H1 (cell line): ENCODE measurements at regions of chr1 and their contacts with region 1.

Region 1: GRCh38 chr1:35882945-35883634 is at the start of gene AGO1:
- DNase-seq: peak; percentile 85 to 99
- H3K4me3 ChIP-seq: peak within 1 kb of the TSS; percentile 90 to 99 (median 98)
- H3K27ac ChIP-seq: 0 out of 2 replicates have a peak within 1 kb of the TSS, but pooled peaks have one; percentile 42
- H3K4me1 ChIP-seq: peaks cover 14 to 32% (median 29%) of the 10 kb centered on the region in 4 experiments
- H3K27me3 ChIP-seq: peaks cover 0 to 5% (median 2%) of the 10 kb centered on the region in 4 experiments; a peak in 2 of 7 replicates
- CTCF ChIP-seq: peak; percentile 90 to 95 (median 94)
- EP300 ChIP-seq: no peak
- POLR2A ChIP-seq: peak in 1 of 2 experiments; percentile 47; a peak in 1 of 3 replicates
- RAD21 ChIP-seq: peak; percentile 31 to 53; a peak in 3 of 4 replicates
- total RNA-seq, gene AGO1: 71.2 and 73.7 TPM in 2 replicates

Region 2: GRCh38 chr1:35857830-35858229 is 25.3 kb before region 1 on chr1:
- CTCF ChIA-PET with region 1: interaction called, 12 read pairs
- POLR2A ChIA-PET with region 1: interaction called, 5 read pairs
- DNase-seq: no peak
- H3K4me3 ChIP-seq: no peak overlapping the region
- H3K27ac ChIP-seq: no peak overlapping the region
- H3K4me1 ChIP-seq: 0 out of 7 replicates have a peak, but pooled peaks cover 0 to 1% (median 0%) of the 10 kb centered on the region in 4 experiments
- H3K27me3 ChIP-seq: no peaks in the 10 kb centered on the region
- CTCF ChIP-seq: peak in 2 of 3 experiments; percentile 20 to 38; a peak in 3 of 4 replicates
- EP300 ChIP-seq: no peak
- POLR2A ChIP-seq: no peak
- RAD21 ChIP-seq: peak; percentile 62 to 67

Region 3: GRCh38 chr1:35863881-35864625 is 19.0 kb before region 1 on chr1:
- CTCF ChIA-PET with region 1: interaction called, 12 read pairs
- POLR2A ChIA-PET with region 1: interaction called, 5 read pairs
- DNase-seq: no peak
- H3K4me3 ChIP-seq: no peak overlapping the region
- H3K27ac ChIP-seq: no peak overlapping the region
- H3K4me1 ChIP-seq: no peaks in the 10 kb centered on the region
- H3K27me3 ChIP-seq: no peaks in the 10 kb centered on the region
- CTCF ChIP-seq: no peak
- EP300 ChIP-seq: no peak
- POLR2A ChIP-seq: no peak
- RAD21 ChIP-seq: no peak

Region 4: GRCh38 chr1:35894656-35895055 is 11.6 kb after region 1 on chr1:
- CTCF ChIA-PET with region 1: interaction called, 22 read pairs
- POLR2A ChIA-PET with region 1: interaction called, 6 read pairs
- DNase-seq: no peak
- H3K4me3 ChIP-seq: no peak overlapping the region
- H3K27ac ChIP-seq: no peak overlapping the region
- H3K4me1 ChIP-seq: no peaks in the 10 kb centered on the region
- H3K27me3 ChIP-seq: no peaks in the 10 kb centered on the region
- CTCF ChIP-seq: no peak
- EP300 ChIP-seq: no peak
- POLR2A ChIP-seq: no peak
- RAD21 ChIP-seq: no peak

Region 5: DNA sequence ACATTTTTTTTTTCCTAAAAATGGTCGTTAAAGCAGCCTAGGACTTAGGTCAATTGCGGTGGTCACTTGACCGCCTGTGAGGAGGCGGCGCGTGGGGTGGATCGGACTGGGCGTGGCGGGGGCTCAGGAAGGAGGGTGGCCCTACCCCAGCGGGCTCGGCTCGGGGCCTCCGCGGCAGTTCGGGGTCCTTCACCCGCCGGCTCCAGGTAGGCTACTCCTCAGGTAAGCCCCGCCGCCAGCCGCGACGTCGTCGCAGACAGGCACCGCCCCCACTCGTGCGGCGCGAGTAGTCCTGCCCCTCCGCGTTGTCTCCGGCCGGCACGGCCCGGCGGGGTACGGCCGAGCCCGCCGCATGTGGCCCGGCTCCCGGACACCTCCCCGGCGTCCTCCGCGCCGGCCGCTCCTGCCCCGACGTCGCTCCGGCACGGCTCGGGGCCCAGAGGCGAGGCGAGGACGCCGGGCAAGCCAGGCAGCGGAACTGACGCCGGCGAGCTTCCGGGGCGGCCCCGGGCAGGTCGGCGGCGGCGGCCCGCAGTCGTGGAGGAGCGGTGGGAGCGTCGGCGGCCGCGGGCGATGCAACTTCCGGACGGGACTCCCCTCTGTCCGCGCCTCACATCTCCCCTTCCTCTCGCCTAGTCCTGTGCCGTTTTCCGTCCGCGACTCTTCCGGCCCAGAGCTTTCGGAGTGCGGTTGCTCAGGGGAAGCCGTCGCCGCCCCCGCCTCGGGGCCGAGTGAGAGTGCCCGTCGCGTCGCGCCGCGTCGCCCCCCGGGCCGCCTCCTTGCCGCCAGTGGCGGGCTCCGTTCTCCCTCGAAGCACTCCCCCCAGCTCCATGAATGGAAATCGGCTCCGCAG is 47.7 kb after region 1 on chr1 and contains the start of gene AGO3:
- CTCF ChIA-PET with region 1: interaction called, 3 read pairs
- POLR2A ChIA-PET with region 1: interaction called, 19 read pairs
- DNase-seq: peak; percentile 53 to 91
- H3K4me3 ChIP-seq: peak within 1 kb of the TSS; percentile 85 to 92 (median 90)
- H3K27ac ChIP-seq: peak within 1 kb of the TSS; percentile 86
- H3K4me1 ChIP-seq: peaks cover 0 to 4% (median 0%) of the 10 kb centered on the region in 4 experiments; a peak in 2 of 7 replicates
- H3K27me3 ChIP-seq: no peaks in the 10 kb centered on the region
- CTCF ChIP-seq: no peak; a peak in 1 of 4 replicates
- EP300 ChIP-seq: no peak
- POLR2A ChIP-seq: peak; percentile 81 to 93
- RAD21 ChIP-seq: no peak; a peak in 1 of 4 replicates
- total RNA-seq, gene AGO3: 26.4 and 26.6 TPM in 2 replicates